Activated CD4-positive, alpha-beta T cell treated with anti-CD3 and anti-CD28 coated beads for 36 hours (primary cell): ENCODE measurements at regions of chr9 and their contacts with region 1.

Region 1: GRCh38 chr9:34376596-34377403 is at the start of gene MYORG:
- DNase-seq: peak; percentile 98
- ATAC-seq: peak; percentile 82
- H3K4me3 Mint-ChIP-seq: peak within 1 kb of the TSS; percentile 76
- H3K27ac Mint-ChIP-seq: peak within 1 kb of the TSS; percentile 62
- H3K4me1 Mint-ChIP-seq: peaks cover 36% of the 10 kb centered on the region
- H3K27me3 Mint-ChIP-seq: no peaks in the 10 kb centered on the region
- total RNA-seq, gene MYORG: 2.2 to 2.3 TPM

Region 2: GRCh38 chr9:33264473-33265177 is 1112.2 kb before region 1 on chr9 and contains the starts of genes BAG1 and CHMP5:
- CTCF ChIA-PET with region 1: no interaction called
- POLR2A ChIA-PET with region 1: no interaction called
- intact Hi-C with region 1: loop called in 1 of 2 experiments (anchors 2 kb)
- DNase-seq: peak; percentile 100
- ATAC-seq: peak; percentile 96
- H3K4me3 Mint-ChIP-seq: peak within 1 kb of the TSS; percentile 97
- H3K27ac Mint-ChIP-seq: peak within 1 kb of the TSS; percentile 99
- H3K4me1 Mint-ChIP-seq: peaks cover 51% of the 10 kb centered on the region
- H3K27me3 Mint-ChIP-seq: no peaks in the 10 kb centered on the region
- total RNA-seq, gene BAG1: 47.9 to 65.8 TPM
- total RNA-seq, gene CHMP5: 102 to 106 TPM

Region 3: GRCh38 chr9:34126207-34127034 is 250.4 kb before region 1 on chr9 and contains the start of gene DCAF12:
- CTCF ChIA-PET with region 1: interaction called, 3 read pairs
- POLR2A ChIA-PET with region 1: interaction called, 3 read pairs
- intact Hi-C with region 1: loop called (anchors 1 to 5 kb)
- DNase-seq: peak; percentile 95
- ATAC-seq: peak; percentile 97
- H3K4me3 Mint-ChIP-seq: peak within 1 kb of the TSS; percentile 95
- H3K27ac Mint-ChIP-seq: peak within 1 kb of the TSS; percentile 98
- H3K4me1 Mint-ChIP-seq: peaks cover 40% of the 10 kb centered on the region
- H3K27me3 Mint-ChIP-seq: no peaks in the 10 kb centered on the region
- total RNA-seq, gene DCAF12: 34.6 to 35.0 TPM

Region 4: GRCh38 chr9:34252670-34253459 is 123.9 kb before region 1 on chr9:
- CTCF ChIA-PET with region 1: interaction called, 15 read pairs
- POLR2A ChIA-PET with region 1: no interaction called
- intact Hi-C with region 1: loop called (anchors 2 kb)
- DNase-seq: peak; percentile 82
- ATAC-seq: peak; percentile 84
- H3K4me3 Mint-ChIP-seq: no peak overlapping the region
- H3K27ac Mint-ChIP-seq: peak overlapping the region; percentile 8
- H3K4me1 Mint-ChIP-seq: peaks cover 21% of the 10 kb centered on the region
- H3K27me3 Mint-ChIP-seq: no peaks in the 10 kb centered on the region

Region 5: GRCh38 chr9:34396276-34397214 is 19.7 kb after region 1 on chr9:
- CTCF ChIA-PET with region 1: no interaction called
- POLR2A ChIA-PET with region 1: no interaction called
- intact Hi-C with region 1: no loop called
- DNase-seq: no peak
- ATAC-seq: no peak
- H3K4me3 Mint-ChIP-seq: no peak overlapping the region
- H3K27ac Mint-ChIP-seq: no peak overlapping the region
- H3K4me1 Mint-ChIP-seq: no peaks in the 10 kb centered on the region
- H3K27me3 Mint-ChIP-seq: no peaks in the 10 kb centered on the region

Region 6: GRCh38 chr9:34522971-34523797 is 146.4 kb after region 1 on chr9 and contains the start of gene ENHO:
- CTCF ChIA-PET with region 1: interaction called, 3 read pairs
- POLR2A ChIA-PET with region 1: no interaction called
- intact Hi-C with region 1: loop called in 1 of 2 experiments (anchors 1 kb)
- DNase-seq: peak; percentile 93
- ATAC-seq: peak; percentile 99
- H3K4me3 Mint-ChIP-seq: peak within 1 kb of the TSS; percentile 54
- H3K27ac Mint-ChIP-seq: no peak within 1 kb of the TSS
- H3K4me1 Mint-ChIP-seq: peaks cover 24% of the 10 kb centered on the region
- H3K27me3 Mint-ChIP-seq: peaks cover 11% of the 10 kb centered on the region
- total RNA-seq, gene ENHO: not detected

Region 7: DNA sequence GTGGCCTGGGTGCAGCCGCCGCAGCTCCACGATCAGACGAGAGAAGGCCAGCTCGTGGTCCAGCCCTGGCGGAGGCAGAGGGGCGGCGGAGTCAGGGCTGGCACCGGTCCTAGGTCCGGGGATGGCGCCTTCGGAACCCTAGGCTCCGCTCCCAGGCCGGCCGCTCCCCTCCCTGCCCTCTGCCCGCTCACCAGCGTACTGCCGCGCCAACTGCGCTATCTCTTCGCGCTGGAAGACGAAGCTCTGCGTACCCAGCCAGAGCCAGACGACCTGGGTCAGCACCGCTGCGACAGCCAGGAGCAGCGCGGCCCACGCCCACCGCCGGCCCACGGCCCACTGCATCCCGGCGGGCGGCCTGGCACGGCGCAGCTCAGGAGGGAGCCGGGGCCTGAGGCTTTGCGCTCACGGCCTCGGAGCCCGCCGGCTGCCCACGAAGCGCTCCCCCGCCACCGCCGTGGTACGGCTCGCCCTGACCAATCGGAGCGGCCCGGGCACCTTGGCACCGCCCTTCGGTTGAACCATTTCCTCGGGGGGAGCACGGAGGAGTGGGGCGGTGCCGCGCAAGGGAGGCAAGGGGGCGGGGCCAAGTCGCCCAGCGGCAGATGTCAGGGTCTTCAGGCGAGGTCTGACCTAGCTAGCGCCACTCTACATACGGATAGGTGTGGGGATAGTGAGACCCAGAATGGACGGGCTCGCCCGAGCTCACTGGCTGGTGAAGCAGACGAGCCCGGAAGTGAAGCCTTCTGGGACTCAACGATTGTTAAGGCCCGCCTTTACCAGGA is 260.7 kb after region 1 on chr9 and contains the start of gene SIGMAR1:
- CTCF ChIA-PET with region 1: no interaction called
- POLR2A ChIA-PET with region 1: interaction called, 11 read pairs
- intact Hi-C with region 1: loop called in 1 of 2 experiments (anchors 1 kb)
- DNase-seq: peak; percentile 96
- ATAC-seq: peak; percentile 94
- H3K4me3 Mint-ChIP-seq: peak within 1 kb of the TSS; percentile 84
- H3K27ac Mint-ChIP-seq: peak within 1 kb of the TSS; percentile 92
- H3K4me1 Mint-ChIP-seq: peaks cover 40% of the 10 kb centered on the region
- H3K27me3 Mint-ChIP-seq: no peaks in the 10 kb centered on the region
- total RNA-seq, gene SIGMAR1: 63.6 to 68.0 TPM